ENCODE measurements at regions of chr11 and their contacts with region 1.

Region 1: DNA sequence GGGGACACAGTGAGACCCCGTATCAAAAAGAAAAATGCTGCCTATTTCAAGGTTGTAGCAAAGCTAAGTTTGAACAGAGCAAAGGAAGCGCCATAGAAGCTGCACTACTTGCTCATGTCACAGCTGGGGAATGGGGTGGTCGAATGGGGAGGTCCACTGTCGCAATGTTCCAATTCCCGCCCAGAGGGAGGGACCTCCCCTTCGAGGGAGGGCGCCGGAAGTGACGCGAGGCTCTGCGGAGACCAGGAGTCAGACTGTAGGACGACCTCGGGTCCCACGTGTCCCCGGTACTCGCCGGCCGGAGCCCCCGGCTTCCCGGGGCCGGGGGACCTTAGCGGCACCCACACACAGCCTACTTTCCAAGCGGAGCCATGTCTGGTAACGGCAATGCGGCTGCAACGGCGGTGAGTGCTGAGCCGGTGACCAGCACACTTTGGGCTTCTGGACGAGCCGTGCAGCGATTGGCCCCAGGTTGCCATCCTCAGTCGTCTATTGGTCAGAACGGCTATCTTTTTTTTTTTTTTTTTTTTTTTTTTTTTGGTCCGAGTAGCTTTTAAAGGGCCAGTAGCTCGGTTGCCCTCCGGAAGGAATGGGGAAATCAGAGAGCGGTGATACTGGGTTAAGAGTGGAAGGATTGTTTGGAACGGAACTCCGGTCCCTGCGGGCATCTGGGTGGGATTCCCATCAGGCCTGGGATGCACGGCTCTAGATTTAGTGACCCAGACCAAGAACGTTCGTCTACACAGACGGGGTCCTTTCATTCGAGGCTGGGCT is at the start of gene HMBS:
- DNase-seq: peak; percentile 78 to 97 (median 92)
- ATAC-seq: peak; percentile 93
- H3K4me3 ChIP-seq: peak within 1 kb of the TSS; percentile 92
- H3K4me3 Mint-ChIP-seq: peak within 1 kb of the TSS; percentile 91
- H3K27ac ChIP-seq: peak within 1 kb of the TSS; percentile 75 to 86
- H3K27ac Mint-ChIP-seq: peak within 1 kb of the TSS; percentile 93
- H3K4me1 ChIP-seq: peaks cover 18% of the 10 kb centered on the region
- H3K4me1 Mint-ChIP-seq: peaks cover 20% of the 10 kb centered on the region
- H3K27me3 ChIP-seq: no peaks in the 10 kb centered on the region
- H3K27me3 Mint-ChIP-seq: no peaks in the 10 kb centered on the region
- CTCF ChIP-seq: no peak
- total RNA-seq, gene HMBS: 5.4 to 6.4 TPM

Region 2: DNA sequence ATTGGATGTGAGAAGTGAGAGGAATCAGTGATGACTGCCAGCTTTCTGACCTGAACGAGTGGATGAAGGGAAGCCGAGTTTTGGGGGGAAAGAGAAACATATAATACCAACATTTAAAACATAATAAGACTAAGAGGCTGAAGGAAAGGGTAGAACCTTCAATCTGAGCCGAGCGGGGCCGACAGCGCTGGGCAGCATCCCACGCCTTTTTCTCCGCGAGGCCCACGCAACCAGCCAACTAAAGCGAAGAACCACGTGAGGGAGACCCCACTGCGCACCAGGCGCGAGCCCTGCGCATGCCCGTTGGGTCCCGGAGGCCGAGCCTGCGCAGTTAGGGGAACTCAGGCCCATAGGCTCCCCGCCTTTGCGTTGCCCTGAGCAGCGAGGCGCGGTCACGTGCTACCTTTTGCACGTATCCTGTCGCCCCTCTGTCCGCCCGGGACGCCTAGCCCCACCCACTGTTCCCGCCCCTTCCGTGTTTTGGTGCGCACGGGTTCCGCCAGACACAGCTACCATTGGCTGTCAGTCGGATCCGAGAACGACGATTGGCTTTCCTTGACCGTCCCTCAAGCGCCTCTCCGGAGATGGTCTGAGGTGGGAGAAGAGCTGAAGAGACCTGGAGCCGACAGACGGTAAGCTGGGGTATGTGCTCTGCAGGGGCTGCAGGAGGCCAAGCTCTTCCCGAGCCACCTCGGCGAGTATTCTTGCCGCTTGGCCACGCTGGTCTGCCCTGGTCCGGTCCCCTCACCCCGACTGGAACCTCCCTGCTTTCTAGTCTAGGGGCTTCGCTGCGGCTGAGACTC is 36.4 kb after region 1 on chr11 and contains the start of gene HINFP:
- CTCF ChIA-PET with region 1: no interaction called
- POLR2A ChIA-PET with region 1: interaction called, 6 read pairs
- intact Hi-C with region 1: loop called (anchors 1 kb)
- DNase-seq: peak; percentile 100
- ATAC-seq: peak; percentile 97
- H3K4me3 ChIP-seq: peak within 1 kb of the TSS; percentile 81 to 93
- H3K4me3 Mint-ChIP-seq: peak within 1 kb of the TSS; percentile 87
- H3K27ac ChIP-seq: peak within 1 kb of the TSS; percentile 69 to 80
- H3K27ac Mint-ChIP-seq: peak within 1 kb of the TSS; percentile 92
- H3K4me1 ChIP-seq: peaks cover 24% of the 10 kb centered on the region
- H3K4me1 Mint-ChIP-seq: peaks cover 43% of the 10 kb centered on the region
- H3K27me3 ChIP-seq: no peaks in the 10 kb centered on the region
- H3K27me3 Mint-ChIP-seq: no peaks in the 10 kb centered on the region
- CTCF ChIP-seq: no peak
- total RNA-seq, gene HINFP: 17.0 to 19.5 TPM

Measured in CD8-positive, alpha-beta T cell (primary cell).